OCI-LY7 (cell line): ENCODE measurements at regions of chr7 and their contacts with region 1.

Region 1: GRCh38 chr7:77903597-77903996 is 105.0 kb downstream of the PHTF2 start:
- DNase-seq: peak; percentile 72
- H3K4me3 ChIP-seq: no peak overlapping the region
- H3K27ac ChIP-seq: peak overlapping the region; percentile 97
- H3K4me1 ChIP-seq: peaks cover 69% of the 10 kb centered on the region
- CTCF ChIP-seq: peak; percentile 79

Region 2: DNA sequence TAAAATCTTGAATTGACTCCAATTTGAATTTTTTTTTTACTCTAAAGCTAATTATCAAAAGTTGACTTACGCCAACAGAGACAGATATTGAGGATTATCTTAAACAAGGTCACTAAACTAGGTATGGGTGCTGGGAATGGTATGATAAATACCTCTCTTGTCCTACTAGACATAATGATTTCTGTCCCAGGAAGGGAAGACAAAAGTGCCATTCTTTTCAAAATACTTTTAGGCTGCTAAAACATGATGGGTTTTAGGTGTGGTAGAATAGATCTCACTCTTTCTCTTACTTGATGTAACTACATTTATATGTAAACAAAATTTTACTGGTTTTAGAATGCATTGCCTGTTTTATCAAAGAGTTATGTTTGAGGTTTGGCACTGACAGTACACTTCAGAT is 120.5 kb before region 1 on chr7:
- CTCF ChIA-PET with region 1: no interaction called
- POLR2A ChIA-PET with region 1: no interaction called
- intact Hi-C with region 1: no loop called
- DNase-seq: no peak
- H3K4me3 ChIP-seq: no peak overlapping the region
- H3K27ac ChIP-seq: no peak overlapping the region
- H3K4me1 ChIP-seq: no peaks in the 10 kb centered on the region
- CTCF ChIP-seq: no peak

Region 3: DNA sequence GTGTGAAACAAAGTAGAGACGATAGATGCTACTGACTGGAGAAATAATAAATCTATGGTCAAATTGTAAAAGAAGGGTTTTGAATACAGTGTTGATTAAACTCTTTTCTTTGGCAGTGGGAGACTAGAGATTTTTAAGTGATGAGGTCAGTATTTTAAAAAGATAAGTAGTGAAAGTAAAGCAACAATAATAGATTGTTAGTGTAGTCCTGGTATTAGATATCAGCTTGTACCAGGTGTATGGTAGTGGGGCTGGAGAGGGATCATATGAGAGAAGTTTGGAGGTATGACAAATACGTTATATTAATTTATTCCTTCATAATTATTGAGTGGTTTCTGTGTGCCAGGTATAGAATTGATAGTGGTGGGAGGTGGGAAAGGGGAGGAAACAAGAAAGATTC is 79.8 kb before region 1 on chr7:
- CTCF ChIA-PET with region 1: no interaction called
- POLR2A ChIA-PET with region 1: interaction called, 10 read pairs
- intact Hi-C with region 1: loop called (anchors 1 kb)
- DNase-seq: no peak
- H3K4me3 ChIP-seq: peak overlapping the region; percentile 55
- H3K27ac ChIP-seq: peak overlapping the region; percentile 94
- H3K4me1 ChIP-seq: peaks cover 67% of the 10 kb centered on the region
- CTCF ChIP-seq: no peak

Region 4: DNA sequence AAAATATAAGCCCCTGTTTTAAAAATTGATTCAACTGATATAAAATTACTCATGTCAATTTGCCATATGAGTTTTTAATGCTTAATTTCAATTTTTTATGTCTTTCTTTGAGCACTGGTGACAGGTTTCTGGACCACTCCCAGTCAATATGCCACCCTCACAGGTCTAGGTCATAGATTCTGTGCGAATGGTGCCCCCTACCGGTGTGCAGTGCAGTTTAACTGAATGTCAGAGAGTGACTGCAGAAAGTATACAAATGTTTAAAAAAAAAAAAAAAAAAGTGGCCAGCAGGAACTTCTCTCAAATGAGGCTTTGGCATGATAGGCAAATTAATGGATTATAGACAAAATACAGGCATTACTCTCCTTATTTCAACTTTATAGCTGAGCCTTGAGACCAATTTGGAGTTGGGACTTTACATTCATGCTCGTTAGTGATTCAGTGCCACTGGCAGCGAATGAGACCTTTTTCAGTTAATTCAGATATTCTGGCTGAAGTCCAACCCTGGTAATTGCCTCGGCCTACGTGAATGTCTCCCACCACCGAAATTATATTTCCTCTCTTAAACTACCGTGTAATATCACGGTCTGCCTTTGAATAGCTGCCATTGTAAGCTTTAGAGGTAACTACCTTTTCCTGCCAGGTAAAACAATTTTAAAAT is 322.6 kb after region 1 on chr7:
- CTCF ChIA-PET with region 1: no interaction called
- POLR2A ChIA-PET with region 1: no interaction called
- intact Hi-C with region 1: no loop called
- DNase-seq: peak; percentile 26
- H3K4me3 ChIP-seq: no peak overlapping the region
- H3K27ac ChIP-seq: no peak overlapping the region
- H3K4me1 ChIP-seq: peaks cover 9% of the 10 kb centered on the region
- CTCF ChIP-seq: peak; percentile 76